ENCODE measurements at regions of chr2 and their contacts with region 1.

Region 1: GRCh38 chr2:73926493-73927338 is at the start of gene DGUOK:
- DNase-seq: peak; percentile 92 to 98 (median 96)

Region 2: DNA sequence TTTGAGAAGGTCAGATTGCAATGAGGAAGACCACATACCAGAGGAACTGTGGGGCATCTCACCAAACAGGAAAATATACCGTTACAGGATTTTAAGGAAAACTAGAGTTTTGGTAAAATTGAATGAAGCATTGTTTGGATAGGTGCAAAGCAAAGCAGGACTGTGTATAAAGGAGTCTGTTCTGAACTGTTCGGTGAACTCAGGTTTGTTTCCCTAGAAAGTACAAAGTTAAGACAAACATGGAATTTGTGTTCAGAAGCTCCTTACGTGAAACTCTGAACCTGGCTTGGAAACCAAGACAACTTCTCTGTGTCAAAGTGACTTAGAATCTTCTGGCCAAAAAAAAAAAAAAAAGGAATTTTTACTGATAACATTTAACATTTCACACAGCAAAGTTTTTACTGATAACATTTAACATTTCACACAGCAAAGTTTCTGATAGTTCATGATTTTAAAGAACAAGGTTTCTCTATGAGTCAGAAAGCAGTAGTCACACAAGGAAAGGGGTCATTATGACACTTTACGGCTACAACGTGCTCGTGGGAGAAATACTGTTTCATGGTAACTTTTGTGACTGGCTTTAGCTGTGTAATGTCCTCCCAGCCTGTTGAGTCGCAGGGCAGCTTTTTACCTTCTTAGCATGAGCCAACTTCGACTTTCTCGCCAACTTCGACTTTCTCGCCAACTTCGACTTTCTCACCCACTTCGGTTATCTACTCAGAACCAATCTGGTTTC is 36.8 kb after region 1 on chr2:
- intact Hi-C with region 1: no loop called
- DNase-seq: no peak

Region 3: DNA sequence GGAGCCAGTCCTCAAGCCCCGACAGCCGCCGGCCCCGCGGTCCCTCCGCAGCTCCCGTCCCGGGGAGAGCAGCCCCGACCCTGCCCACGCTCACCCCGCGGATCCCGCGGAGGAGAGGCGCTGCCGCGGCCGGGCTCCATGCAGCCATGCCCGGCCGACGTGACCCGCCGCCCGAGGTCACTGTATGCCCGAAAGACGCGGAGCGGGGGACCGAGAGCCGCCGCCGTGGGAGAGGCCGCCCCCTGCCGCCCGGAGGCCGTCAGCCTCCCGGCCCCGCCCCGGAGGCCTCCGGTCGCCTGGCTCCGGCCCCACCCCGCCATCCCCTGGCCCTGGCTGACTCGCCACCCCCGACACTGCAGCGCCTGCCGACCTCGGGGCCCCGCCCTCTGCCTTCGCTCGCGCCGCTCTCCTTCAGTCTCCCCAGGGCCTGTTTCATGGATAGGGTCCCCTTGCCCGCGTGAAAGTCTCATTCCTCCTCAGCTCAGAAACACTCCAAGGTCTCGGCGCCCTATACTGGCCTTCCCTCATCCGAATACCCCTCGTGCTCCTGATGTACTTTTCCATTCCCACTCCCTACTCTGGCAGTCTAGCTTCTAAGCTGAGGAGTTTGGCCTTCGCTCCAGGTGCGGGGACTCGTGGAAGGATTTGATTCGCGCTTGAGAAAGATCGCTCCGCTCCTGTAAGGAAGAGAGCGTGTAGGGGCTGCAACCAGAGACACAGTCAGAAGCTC is 221.2 kb after region 1 on chr2 and contains the start of gene BOLA3:
- intact Hi-C with region 1: loop called (anchors 10 kb)
- DNase-seq: peak; percentile 60 to 96 (median 90)

Measured in head of caudate nucleus (tissue), 42 donors.